ENCODE measurements at regions of chr3 and their contacts with region 1.

Region 1: GRCh38 chr3:187227658-187228258 is 30.5 kb downstream of the RTP1 start:
- DNase-seq: no peak
- ATAC-seq: peak in 1 of 2 donors; percentile 71

Region 2: GRCh38 chr3:187295316-187296034 is 67.7 kb after region 1 on chr3:
- intact Hi-C with region 1: loop called in 1 of 2 experiments (anchors 5 kb)
- DNase-seq: no peak
- ATAC-seq: no peak